H1 (cell line): ENCODE measurements at regions of chr11 and their contacts with region 1.

Region 1: DNA sequence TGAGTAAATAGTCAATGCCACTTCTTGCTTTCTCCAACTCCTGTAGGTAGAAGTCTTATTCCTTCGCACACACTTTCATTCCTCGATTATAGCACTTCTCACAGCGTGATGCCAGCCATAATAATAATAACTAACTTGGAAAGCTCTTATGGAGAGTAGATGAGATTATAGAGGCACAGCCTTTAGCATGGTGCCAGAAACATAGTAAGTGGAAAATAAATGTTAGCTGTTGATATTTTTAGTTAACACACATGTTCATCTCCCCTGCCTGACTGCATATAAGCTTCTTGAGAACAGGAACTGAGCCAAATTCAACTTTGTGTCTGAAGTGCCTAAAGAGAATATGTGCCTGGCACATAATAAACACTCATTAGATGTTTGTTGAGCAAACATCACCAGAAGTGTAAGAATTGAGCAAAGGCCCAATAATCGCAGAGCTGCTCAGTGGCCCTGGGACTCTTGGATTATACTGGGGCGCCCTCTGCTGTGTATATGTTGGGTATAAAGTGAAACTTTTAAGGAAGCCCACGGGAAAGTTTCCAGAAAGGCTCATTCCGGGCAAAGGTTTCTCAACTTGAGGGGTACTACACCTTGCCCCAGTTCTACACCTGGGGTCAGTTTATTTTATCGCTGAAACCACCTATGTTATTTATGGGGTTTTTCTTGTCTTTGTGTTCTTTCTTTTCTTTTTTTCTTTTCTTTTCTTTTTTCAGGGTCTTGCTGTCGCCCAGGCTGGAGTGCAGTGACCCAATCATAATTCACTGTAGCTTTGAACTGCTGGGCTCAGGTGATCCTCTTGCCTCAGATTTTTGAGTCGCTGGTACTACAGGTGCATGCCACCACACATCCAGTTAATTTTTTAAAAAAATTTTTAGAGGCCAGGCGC is 22.3 kb downstream of the SLN start:
- DNase-seq: peak in 1 of 2 experiments; percentile 78
- H3K4me3 ChIP-seq: no peak overlapping the region
- H3K27ac ChIP-seq: no peak overlapping the region
- H3K4me1 ChIP-seq: no peaks in the 10 kb centered on the region
- H3K27me3 ChIP-seq: no peaks in the 10 kb centered on the region
- CTCF ChIP-seq: peak; percentile 17 to 94 (median 67)
- EP300 ChIP-seq: no peak
- POLR2A ChIP-seq: no peak
- RAD21 ChIP-seq: peak; percentile 96 to 99

Region 2: GRCh38 chr11:107549253-107549953 is 140.2 kb before region 1 on chr11:
- CTCF ChIA-PET with region 1: interaction called, 66 read pairs
- POLR2A ChIA-PET with region 1: no interaction called
- DNase-seq: no peak
- H3K4me3 ChIP-seq: no peak overlapping the region
- H3K27ac ChIP-seq: no peak overlapping the region
- H3K4me1 ChIP-seq: no peaks in the 10 kb centered on the region
- H3K27me3 ChIP-seq: no peaks in the 10 kb centered on the region
- CTCF ChIP-seq: peak in 2 of 3 experiments; percentile 60 to 71; a peak in 3 of 4 replicates
- EP300 ChIP-seq: no peak
- POLR2A ChIP-seq: no peak
- RAD21 ChIP-seq: peak; percentile 78 to 82

Region 3: GRCh38 chr11:107598225-107599139 is 91.1 kb before region 1 on chr11:
- CTCF ChIA-PET with region 1: interaction called, 73 read pairs
- POLR2A ChIA-PET with region 1: interaction called, 4 read pairs
- DNase-seq: peak in 1 of 2 experiments; percentile 69
- H3K4me3 ChIP-seq: no peak overlapping the region
- H3K27ac ChIP-seq: no peak overlapping the region
- H3K4me1 ChIP-seq: peaks cover 0 to 9% (median 4%) of the 10 kb centered on the region in 4 experiments; a peak in 4 of 7 replicates
- H3K27me3 ChIP-seq: peaks cover 0 to 6% (median 4%) of the 10 kb centered on the region in 4 experiments; a peak in 3 of 7 replicates
- CTCF ChIP-seq: peak; percentile 76 to 79 (median 77)
- EP300 ChIP-seq: no peak
- POLR2A ChIP-seq: no peak
- RAD21 ChIP-seq: peak; percentile 70 to 80

Region 4: GRCh38 chr11:107665018-107665417 is 24.5 kb before region 1 on chr11:
- CTCF ChIA-PET with region 1: interaction called, 149 read pairs
- POLR2A ChIA-PET with region 1: no interaction called
- DNase-seq: no peak
- H3K4me3 ChIP-seq: no peak overlapping the region
- H3K27ac ChIP-seq: no peak overlapping the region
- H3K4me1 ChIP-seq: peaks cover 0 to 10% (median 4%) of the 10 kb centered on the region in 4 experiments; a peak in 4 of 7 replicates
- H3K27me3 ChIP-seq: no peaks in the 10 kb centered on the region
- CTCF ChIP-seq: no peak
- EP300 ChIP-seq: no peak
- POLR2A ChIP-seq: no peak
- RAD21 ChIP-seq: no peak

Region 5: DNA sequence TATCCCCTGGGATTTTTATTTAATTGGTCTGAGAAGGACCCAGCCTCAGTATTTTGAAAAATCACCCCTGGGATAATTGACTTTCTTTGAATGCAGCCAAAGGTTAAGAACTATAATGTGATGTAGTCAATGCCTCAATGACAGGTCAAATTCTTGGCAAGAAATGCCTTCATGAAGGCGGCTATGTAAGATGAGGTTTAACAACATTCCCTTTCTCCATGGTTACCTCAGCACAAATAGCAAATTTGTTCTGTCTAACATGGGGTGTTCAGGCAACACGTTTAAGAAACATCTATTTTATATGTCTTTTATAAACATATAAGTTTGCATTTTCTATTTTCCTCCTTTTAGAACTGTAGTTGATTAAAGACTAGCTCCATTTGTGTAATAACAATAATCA is 17.0 kb after region 1 on chr11:
- CTCF ChIA-PET with region 1: interaction called, 102 read pairs
- POLR2A ChIA-PET with region 1: no interaction called
- DNase-seq: no peak
- H3K4me3 ChIP-seq: no peak overlapping the region
- H3K27ac ChIP-seq: no peak overlapping the region
- H3K4me1 ChIP-seq: peaks cover 0 to 12% (median 2%) of the 10 kb centered on the region in 4 experiments; a peak in 3 of 7 replicates
- H3K27me3 ChIP-seq: no peaks in the 10 kb centered on the region; a peak in 1 of 7 replicates
- CTCF ChIP-seq: no peak
- EP300 ChIP-seq: no peak
- POLR2A ChIP-seq: no peak
- RAD21 ChIP-seq: no peak

Region 6: DNA sequence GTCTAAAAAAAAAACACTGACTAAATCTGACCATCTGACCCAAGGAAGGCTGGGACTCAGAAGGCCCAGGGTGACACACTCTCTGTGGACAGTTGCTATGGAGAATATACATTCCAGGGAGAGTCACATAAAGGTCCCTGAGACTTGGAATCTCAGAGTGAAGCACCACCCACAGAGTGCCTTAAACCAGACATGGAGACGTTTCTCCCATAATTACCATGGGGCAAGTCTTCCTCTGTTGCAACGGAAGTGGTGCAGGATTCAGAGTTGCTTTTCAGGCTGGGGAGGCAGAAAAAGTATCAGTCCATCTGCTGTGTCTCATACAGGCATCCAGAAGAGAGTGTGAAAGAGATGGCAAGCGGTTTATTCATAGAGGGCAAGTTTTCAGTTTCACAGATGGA is 81.0 kb after region 1 on chr11:
- CTCF ChIA-PET with region 1: interaction called, 15 read pairs
- POLR2A ChIA-PET with region 1: no interaction called
- DNase-seq: peak in 1 of 2 experiments; percentile 29
- H3K4me3 ChIP-seq: no peak overlapping the region
- H3K27ac ChIP-seq: no peak overlapping the region
- H3K4me1 ChIP-seq: no peaks in the 10 kb centered on the region
- H3K27me3 ChIP-seq: no peaks in the 10 kb centered on the region
- CTCF ChIP-seq: no peak
- EP300 ChIP-seq: no peak
- POLR2A ChIP-seq: no peak
- RAD21 ChIP-seq: no peak

Region 7: DNA sequence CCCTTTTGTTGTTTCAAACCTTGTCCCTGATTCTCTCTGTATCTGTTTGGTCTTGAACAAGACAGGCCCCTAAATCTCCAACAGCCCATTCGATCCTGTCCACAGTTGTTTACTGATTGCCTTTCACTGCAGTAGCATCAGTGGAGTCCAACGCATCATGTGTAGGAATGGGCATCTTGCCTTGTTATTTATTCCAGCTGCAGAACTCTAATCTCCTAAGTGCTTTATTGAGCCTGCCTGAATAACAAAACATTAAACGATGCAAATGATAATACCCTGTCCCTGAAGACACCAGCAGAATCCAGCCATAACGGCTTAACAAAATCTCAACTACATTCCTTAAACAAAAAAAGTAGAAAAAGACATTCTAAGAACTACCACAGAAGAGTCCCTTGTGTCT is 119.0 kb after region 1 on chr11:
- CTCF ChIA-PET with region 1: no interaction called
- POLR2A ChIA-PET with region 1: no interaction called
- DNase-seq: no peak
- H3K4me3 ChIP-seq: no peak overlapping the region
- H3K27ac ChIP-seq: no peak overlapping the region
- H3K4me1 ChIP-seq: no peaks in the 10 kb centered on the region
- H3K27me3 ChIP-seq: no peaks in the 10 kb centered on the region
- CTCF ChIP-seq: no peak
- EP300 ChIP-seq: no peak
- POLR2A ChIP-seq: no peak
- RAD21 ChIP-seq: no peak

Region 8: GRCh38 chr11:107999759-108000455 is 310.3 kb after region 1 on chr11:
- CTCF ChIA-PET with region 1: no interaction called
- POLR2A ChIA-PET with region 1: no interaction called
- DNase-seq: peak; percentile 59 to 72
- H3K4me3 ChIP-seq: no peak overlapping the region
- H3K27ac ChIP-seq: no peak overlapping the region
- H3K4me1 ChIP-seq: no peaks in the 10 kb centered on the region
- H3K27me3 ChIP-seq: no peaks in the 10 kb centered on the region
- CTCF ChIP-seq: peak; percentile 64 to 99 (median 90)
- EP300 ChIP-seq: no peak
- POLR2A ChIP-seq: no peak
- RAD21 ChIP-seq: peak; percentile 89 to 93